Activated CD4-positive, alpha-beta T cell treated with anti-CD3 and anti-CD28 coated beads for 36 hours (primary cell): ENCODE measurements at regions of chr11 and their contacts with region 1.

Region 1: DNA sequence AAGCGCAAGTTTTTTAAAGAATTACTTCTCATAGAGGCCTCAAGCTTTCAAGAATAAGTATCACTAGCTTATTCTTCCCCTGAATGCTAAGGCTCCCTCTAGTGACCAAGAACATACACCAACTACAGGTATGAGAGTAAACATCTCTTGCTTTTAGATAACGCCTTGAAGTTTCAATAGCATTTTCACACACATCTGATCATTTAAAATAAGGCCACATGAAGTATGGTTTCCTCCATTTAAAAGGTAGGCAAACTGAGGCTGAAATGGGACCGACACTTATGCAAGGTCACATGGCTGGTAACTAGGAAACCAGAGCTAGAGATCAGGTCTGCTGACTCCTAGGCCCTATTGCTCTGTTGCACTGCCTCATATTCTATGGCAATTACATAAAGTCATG is 66.5 kb downstream of the CCDC34 start:
- DNase-seq: no peak
- ATAC-seq: peak; percentile 27
- H3K4me3 Mint-ChIP-seq: no peak overlapping the region
- H3K27ac Mint-ChIP-seq: no peak overlapping the region
- H3K4me1 Mint-ChIP-seq: peaks cover 7% of the 10 kb centered on the region
- H3K27me3 Mint-ChIP-seq: peaks cover 22% of the 10 kb centered on the region

Region 2: DNA sequence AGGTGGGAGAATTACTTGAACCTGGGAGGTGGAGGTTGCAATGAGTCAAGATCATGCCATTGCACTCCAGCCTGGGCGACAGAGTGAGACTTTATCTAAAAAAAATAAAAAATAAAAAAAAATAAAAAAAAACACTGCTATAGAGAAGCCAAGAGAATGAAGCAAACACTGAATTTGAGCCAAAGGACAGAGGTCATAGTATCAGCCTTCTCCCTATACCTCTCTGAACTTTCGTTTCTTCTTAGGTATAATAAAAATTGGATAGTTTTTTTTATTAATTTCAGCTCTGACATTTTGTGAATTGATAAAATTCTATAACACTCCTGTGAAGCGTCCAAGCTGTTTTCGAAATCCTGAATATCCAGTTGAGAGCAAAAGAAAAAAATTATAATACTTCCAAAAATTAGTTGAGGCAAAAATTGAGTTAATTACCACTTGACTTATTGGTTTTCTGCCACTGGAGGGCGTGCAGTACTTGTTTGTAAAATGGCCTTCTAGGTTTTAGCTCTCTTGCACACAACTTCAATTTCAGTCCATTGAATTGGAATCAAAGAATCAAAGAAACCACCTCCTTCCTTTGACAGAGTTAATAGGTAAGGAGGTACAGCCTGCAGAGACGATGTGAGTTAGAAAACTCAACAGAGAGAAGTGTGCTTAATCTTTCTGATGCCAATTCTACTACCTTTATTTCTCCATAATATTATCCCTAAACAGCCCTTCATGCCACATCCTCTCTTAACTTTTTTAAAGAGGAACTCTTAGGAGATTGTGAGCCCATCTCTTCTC is 112.6 kb before region 1 on chr11:
- CTCF ChIA-PET with region 1: interaction called, 6 read pairs
- POLR2A ChIA-PET with region 1: no interaction called
- intact Hi-C with region 1: loop called in 1 of 2 experiments (anchors 5 kb)
- DNase-seq: peak; percentile 66
- ATAC-seq: no peak
- H3K4me3 Mint-ChIP-seq: no peak overlapping the region
- H3K27ac Mint-ChIP-seq: no peak overlapping the region
- H3K4me1 Mint-ChIP-seq: no peaks in the 10 kb centered on the region
- H3K27me3 Mint-ChIP-seq: peaks cover 21% of the 10 kb centered on the region

Region 3: DNA sequence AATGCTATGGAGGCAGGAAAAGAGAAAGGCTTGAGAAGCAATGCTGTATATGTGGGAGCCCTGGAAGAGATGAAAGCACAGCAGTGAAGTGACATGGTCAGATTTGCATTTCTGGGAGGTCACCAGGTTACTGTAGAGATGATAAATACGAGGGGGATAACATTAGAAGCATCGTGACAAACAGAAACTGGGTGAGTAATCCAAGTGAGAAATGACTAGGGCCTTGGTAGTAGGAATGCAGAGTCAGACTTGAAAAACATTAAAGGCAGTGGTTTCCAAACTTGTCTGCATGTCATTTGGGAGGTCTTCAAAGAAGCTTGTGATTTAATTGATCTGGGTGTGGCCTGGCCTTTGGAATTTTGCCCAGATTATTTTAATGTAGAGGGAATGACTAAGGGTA is 22.6 kb after region 1 on chr11:
- CTCF ChIA-PET with region 1: interaction called, 6 read pairs
- POLR2A ChIA-PET with region 1: no interaction called
- intact Hi-C with region 1: loop called (anchors 1 to 2 kb)
- DNase-seq: peak; percentile 16
- ATAC-seq: peak; percentile 97
- H3K4me3 Mint-ChIP-seq: no peak overlapping the region
- H3K27ac Mint-ChIP-seq: no peak overlapping the region
- H3K4me1 Mint-ChIP-seq: peaks cover 13% of the 10 kb centered on the region
- H3K27me3 Mint-ChIP-seq: peaks cover 12% of the 10 kb centered on the region